CD4-positive, alpha-beta T cell (primary cell): ENCODE measurements at regions of chr1 and their contacts with region 1.

Region 1: DNA sequence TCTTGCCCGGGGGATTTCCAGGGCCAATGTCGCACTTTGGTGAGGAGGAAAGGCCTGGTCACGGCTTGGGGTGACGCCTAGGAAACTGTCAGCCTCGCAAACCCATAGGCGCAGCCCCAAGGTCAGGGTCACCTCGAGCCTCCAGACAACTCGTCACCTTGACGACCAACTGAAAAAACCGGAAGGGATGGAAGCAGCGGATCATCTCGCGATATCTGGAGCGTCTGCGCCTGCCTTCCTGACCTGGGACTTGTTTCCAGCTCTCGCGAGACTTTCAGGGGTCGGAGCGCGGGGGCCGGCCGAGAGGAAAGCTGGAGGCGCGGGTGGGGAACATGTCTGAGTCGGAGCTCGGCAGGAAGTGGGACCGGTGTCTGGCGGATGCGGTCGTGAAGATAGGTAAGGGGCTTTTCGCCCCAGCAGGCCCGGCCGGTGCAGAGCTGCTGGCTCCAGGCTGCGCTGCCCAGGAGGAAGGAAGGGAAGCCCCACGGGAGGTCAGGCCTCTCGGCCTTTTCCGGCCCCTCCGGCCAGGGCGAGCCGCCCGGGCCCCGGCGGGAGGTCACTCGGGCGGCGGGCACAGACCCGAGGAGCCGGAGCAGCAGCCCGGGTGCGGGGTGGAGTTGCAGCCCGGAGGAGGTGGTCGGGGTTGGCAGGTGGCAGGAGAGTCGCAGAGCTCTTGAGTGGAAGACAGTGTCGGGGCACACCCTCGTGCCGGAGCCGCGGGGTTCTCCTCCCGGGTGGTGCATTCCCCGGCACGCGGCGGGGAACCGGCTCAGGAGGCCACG is 47.2 kb upstream of the NBL1 start:
- DNase-seq: peak; percentile 92 to 100 (median 94)
- ATAC-seq: peak; percentile 63
- H3K4me3 ChIP-seq: peak overlapping the region; percentile 90
- H3K4me3 Mint-ChIP-seq: peak overlapping the region; percentile 96
- H3K27ac ChIP-seq: peak overlapping the region; percentile 100
- H3K27ac Mint-ChIP-seq: peak overlapping the region; percentile 100
- H3K4me1 ChIP-seq: peaks cover 55% of the 10 kb centered on the region
- H3K4me1 Mint-ChIP-seq: peaks cover 49% of the 10 kb centered on the region
- H3K27me3 ChIP-seq: no peaks in the 10 kb centered on the region
- H3K27me3 Mint-ChIP-seq: no peaks in the 10 kb centered on the region
- CTCF ChIP-seq: no peak

Region 2: DNA sequence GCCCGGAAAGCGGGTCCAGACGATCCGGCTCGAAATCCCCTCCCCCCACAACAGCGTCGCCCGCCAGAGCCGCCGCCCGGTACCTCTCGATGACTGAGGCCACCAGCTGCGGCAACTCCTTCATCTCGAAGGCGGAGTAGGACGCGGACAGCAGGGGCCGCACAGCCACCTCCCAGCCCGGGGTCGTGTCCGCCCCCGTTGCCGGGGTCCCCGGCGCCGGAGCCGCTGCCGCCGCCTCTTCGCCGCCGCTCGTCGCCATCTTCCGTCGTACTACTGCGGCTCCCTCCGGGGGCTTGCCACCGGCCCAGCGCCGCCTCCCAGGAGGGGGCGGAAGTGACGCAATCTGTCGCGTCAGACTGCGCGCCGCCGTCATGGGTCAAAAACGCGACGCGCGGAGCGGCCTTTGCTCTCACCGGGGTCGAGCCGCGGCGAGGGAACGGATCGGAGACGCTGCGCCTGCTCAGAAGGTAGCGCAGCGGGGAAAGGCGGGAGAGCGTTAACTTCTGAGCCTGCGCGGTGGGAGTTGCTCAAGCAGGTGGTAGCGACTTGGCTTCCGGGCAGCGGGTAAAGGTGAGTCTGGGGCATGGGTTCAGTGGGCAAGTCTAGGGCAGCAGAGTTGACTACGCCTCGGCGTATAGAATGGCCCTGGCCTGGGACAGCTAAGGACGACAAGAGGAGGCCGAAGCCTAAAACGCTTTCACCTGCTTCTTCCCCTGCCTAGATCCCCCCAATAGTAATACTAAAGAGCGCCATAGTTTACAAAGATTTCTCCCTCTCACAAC is 386.7 kb before region 1 on chr1 and contains the start of gene UBR4:
- CTCF ChIA-PET with region 1: no interaction called
- POLR2A ChIA-PET with region 1: interaction called, 8 read pairs
- intact Hi-C with region 1: loop called in 1 of 2 experiments (anchors 5 kb)
- DNase-seq: peak; percentile 92 to 99 (median 96)
- ATAC-seq: peak; percentile 92
- H3K4me3 ChIP-seq: peak within 1 kb of the TSS; percentile 93
- H3K4me3 Mint-ChIP-seq: peak within 1 kb of the TSS; percentile 96
- H3K27ac ChIP-seq: peak within 1 kb of the TSS; percentile 87 to 92
- H3K27ac Mint-ChIP-seq: peak within 1 kb of the TSS; percentile 95
- H3K4me1 ChIP-seq: peaks cover 42% of the 10 kb centered on the region
- H3K4me1 Mint-ChIP-seq: peaks cover 77% of the 10 kb centered on the region
- H3K27me3 ChIP-seq: no peaks in the 10 kb centered on the region
- H3K27me3 Mint-ChIP-seq: no peaks in the 10 kb centered on the region
- CTCF ChIP-seq: no peak
- total RNA-seq, gene UBR4: 116 to 125 TPM

Region 3: DNA sequence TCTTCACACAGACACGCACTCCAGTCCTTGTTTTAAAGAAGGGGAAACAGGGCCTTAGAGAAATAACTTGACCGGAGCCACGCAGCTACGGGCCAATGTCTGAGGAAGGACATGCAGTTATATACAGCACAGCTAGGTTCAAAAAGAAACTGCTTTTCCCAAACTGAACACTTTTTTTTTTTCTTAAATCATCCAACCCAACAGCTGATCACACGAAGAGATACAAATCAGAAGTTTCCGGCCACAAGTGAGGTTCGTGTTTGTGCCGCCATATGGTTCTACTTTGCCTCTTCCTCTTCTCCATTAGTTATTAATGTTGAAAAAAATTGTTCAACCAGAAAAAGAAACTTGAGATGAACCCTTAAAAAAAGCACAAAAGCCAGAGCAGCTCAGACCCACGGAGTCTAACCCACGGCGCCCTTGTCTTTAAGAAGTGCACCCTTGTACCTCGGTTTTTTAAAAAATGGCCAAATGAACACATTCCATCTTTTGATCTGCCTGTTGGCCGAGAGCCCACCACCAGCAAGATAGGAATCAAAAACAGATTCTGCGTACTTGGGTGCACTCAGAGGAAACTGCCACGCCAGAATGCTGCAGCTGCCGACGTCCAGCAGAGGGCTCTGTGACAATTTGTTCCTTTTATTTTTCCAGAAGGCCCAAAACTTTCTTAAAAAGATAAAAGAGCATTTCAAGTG is 205.9 kb before region 1 on chr1:
- CTCF ChIA-PET with region 1: interaction called, 4 read pairs
- POLR2A ChIA-PET with region 1: interaction called, 29 read pairs
- intact Hi-C with region 1: loop called (anchors 1 to 5 kb)
- DNase-seq: peak; percentile 31 to 91 (median 62)
- ATAC-seq: peak; percentile 76
- H3K4me3 ChIP-seq: peak overlapping the region; percentile 51
- H3K4me3 Mint-ChIP-seq: peak overlapping the region; percentile 92
- H3K27ac ChIP-seq: peak overlapping the region; percentile 46 to 62
- H3K27ac Mint-ChIP-seq: peak overlapping the region; percentile 94
- H3K4me1 ChIP-seq: peaks cover 92% of the 10 kb centered on the region
- H3K4me1 Mint-ChIP-seq: peaks cover 86% of the 10 kb centered on the region
- H3K27me3 ChIP-seq: no peaks in the 10 kb centered on the region
- H3K27me3 Mint-ChIP-seq: no peaks in the 10 kb centered on the region
- CTCF ChIP-seq: peak; percentile 90

Region 4: GRCh38 chr1:19485362-19486187 is 111.3 kb before region 1 on chr1 and contains the start of gene CAPZB:
- CTCF ChIA-PET with region 1: interaction called, 11 read pairs
- POLR2A ChIA-PET with region 1: interaction called, 74 read pairs
- intact Hi-C with region 1: loop called (anchors 1 to 2 kb)
- DNase-seq: peak; percentile 89 to 97 (median 96)
- ATAC-seq: peak; percentile 81
- H3K4me3 ChIP-seq: peak within 1 kb of the TSS; percentile 78
- H3K4me3 Mint-ChIP-seq: peak within 1 kb of the TSS; percentile 94
- H3K27ac ChIP-seq: peak within 1 kb of the TSS; percentile 80 to 88
- H3K27ac Mint-ChIP-seq: peak within 1 kb of the TSS; percentile 97
- H3K4me1 ChIP-seq: peaks cover 68% of the 10 kb centered on the region
- H3K4me1 Mint-ChIP-seq: peaks cover 68% of the 10 kb centered on the region
- H3K27me3 ChIP-seq: no peaks in the 10 kb centered on the region
- H3K27me3 Mint-ChIP-seq: no peaks in the 10 kb centered on the region
- CTCF ChIP-seq: no peak
- total RNA-seq, gene CAPZB: 168 to 173 TPM

Region 5: GRCh38 chr1:19613171-19613703 is 16.3 kb after region 1 on chr1:
- CTCF ChIA-PET with region 1: interaction called, 6 read pairs
- POLR2A ChIA-PET with region 1: interaction called, 43 read pairs
- intact Hi-C with region 1: no loop called
- DNase-seq: no peak
- ATAC-seq: no peak
- H3K4me3 ChIP-seq: no peak overlapping the region
- H3K4me3 Mint-ChIP-seq: no peak overlapping the region
- H3K27ac ChIP-seq: no peak overlapping the region
- H3K27ac Mint-ChIP-seq: peak overlapping the region; percentile 5
- H3K4me1 ChIP-seq: peaks cover 1% of the 10 kb centered on the region
- H3K4me1 Mint-ChIP-seq: peaks cover 28% of the 10 kb centered on the region
- H3K27me3 ChIP-seq: no peaks in the 10 kb centered on the region
- H3K27me3 Mint-ChIP-seq: no peaks in the 10 kb centered on the region
- CTCF ChIP-seq: no peak

Region 6: DNA sequence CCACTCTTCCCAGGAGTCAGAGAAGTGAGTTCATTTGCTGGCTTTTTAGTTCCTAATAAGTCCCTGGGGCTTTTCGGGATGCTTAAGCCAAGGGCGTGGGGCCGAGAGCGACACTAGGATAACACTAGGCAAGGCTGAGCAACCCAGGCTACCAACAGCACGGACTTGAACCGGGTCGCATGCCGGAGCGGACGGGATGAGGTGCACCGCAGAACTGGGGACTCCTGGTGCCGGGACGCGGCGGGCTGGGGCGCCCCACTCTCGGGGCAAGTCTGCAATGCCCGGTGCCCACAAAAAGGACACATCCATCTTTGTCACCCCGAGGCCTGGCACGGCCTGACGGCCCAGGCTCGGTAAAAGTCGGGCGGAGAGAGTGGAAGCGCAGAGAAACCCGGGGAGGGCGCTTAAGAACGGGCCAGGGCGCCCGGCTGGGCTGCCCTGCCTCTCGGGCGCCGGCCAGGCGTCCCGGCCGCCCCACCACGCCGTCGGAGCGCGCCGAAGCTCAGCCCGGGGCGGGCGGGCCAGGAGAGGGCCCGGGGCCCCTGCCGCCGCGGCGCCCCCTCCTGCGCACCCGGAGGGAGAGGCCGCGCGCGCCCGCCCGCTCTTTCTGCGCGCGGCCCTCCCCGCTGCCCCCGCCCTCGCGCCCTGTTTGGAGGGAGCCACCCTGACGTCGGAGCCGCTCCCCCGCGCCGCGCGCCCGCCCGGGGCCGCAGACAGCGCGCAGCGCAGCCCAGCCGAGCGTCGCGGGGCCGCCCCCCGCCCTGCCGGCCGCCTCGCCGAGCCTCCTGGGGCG is 46.9 kb after region 1 on chr1 and contains the start of gene NBL1:
- CTCF ChIA-PET with region 1: no interaction called
- POLR2A ChIA-PET with region 1: interaction called, 48 read pairs
- intact Hi-C with region 1: loop called (anchors 5 kb)
- DNase-seq: peak; percentile 51 to 91 (median 72)
- ATAC-seq: peak; percentile 86
- H3K4me3 ChIP-seq: peak within 1 kb of the TSS; percentile 66
- H3K4me3 Mint-ChIP-seq: peak within 1 kb of the TSS; percentile 96
- H3K27ac ChIP-seq: no peak within 1 kb of the TSS
- H3K27ac Mint-ChIP-seq: peak within 1 kb of the TSS; percentile 86
- H3K4me1 ChIP-seq: peaks cover 42% of the 10 kb centered on the region
- H3K4me1 Mint-ChIP-seq: peaks cover 35% of the 10 kb centered on the region
- H3K27me3 ChIP-seq: peaks cover 11 to 15% of the 10 kb centered on the region in 2 experiments
- H3K27me3 Mint-ChIP-seq: peaks cover 30% of the 10 kb centered on the region
- CTCF ChIP-seq: no peak
- total RNA-seq, gene NBL1: 26.4 to 29.7 TPM

Region 7: DNA sequence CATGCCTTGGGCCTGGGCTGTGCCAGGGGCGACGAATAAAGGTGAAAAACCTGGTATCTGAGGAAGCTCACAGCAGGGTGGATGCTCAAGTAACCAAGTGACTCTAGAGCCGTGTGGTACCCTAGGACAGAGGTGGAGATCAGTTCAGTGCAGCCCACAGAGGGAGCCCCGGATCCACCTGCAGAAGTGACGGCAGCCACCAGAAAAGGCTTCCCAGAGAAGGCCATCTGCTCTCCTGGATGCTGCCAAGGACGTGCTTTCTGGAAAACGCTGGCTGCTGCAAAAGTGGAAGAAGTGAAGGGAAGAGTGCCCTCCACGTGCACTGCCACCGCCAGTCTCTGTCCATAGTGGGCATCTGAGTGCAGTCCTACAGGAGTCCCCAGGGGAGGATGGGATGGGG is 175.1 kb after region 1 on chr1:
- CTCF ChIA-PET with region 1: no interaction called
- POLR2A ChIA-PET with region 1: no interaction called
- intact Hi-C with region 1: no loop called
- DNase-seq: no peak
- ATAC-seq: no peak
- H3K4me3 ChIP-seq: no peak overlapping the region
- H3K4me3 Mint-ChIP-seq: no peak overlapping the region
- H3K27ac ChIP-seq: no peak overlapping the region
- H3K27ac Mint-ChIP-seq: no peak overlapping the region
- H3K4me1 ChIP-seq: no peaks in the 10 kb centered on the region
- H3K4me1 Mint-ChIP-seq: no peaks in the 10 kb centered on the region
- H3K27me3 ChIP-seq: no peaks in the 10 kb centered on the region
- H3K27me3 Mint-ChIP-seq: no peaks in the 10 kb centered on the region
- CTCF ChIP-seq: no peak

Region 8: DNA sequence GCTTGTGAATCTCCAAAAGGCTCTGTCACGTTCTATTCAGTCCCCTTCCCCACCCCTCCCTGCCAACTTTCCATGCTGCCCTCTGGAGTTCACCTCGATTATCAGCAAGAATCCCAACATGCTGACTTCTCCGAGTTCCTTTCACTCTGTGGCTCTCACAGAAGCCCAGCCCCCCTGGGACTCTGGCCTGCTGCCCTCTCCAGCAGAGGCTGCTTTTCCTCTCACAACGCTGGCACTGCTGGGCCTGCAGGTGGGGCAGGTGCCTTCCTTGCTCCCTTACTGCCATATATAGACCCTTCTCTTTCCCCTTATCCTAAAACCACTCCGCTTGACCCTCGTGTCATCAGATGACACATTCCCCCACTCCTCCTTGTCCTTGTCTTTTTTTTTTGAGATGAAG is 228.4 kb after region 1 on chr1:
- CTCF ChIA-PET with region 1: no interaction called
- POLR2A ChIA-PET with region 1: no interaction called
- intact Hi-C with region 1: no loop called
- DNase-seq: no peak
- ATAC-seq: no peak
- H3K4me3 ChIP-seq: no peak overlapping the region
- H3K4me3 Mint-ChIP-seq: no peak overlapping the region
- H3K27ac ChIP-seq: no peak overlapping the region
- H3K27ac Mint-ChIP-seq: no peak overlapping the region
- H3K4me1 ChIP-seq: no peaks in the 10 kb centered on the region
- H3K4me1 Mint-ChIP-seq: no peaks in the 10 kb centered on the region
- H3K27me3 ChIP-seq: peaks cover 0 to 3% of the 10 kb centered on the region in 2 experiments
- H3K27me3 Mint-ChIP-seq: peaks cover 26% of the 10 kb centered on the region
- CTCF ChIP-seq: no peak